ENCODE measurements at regions of chr15 and their contacts with region 1.

Region 1: GRCh38 chr15:101501703-101502373 is 12.3 kb upstream of the PCSK6 start:
- DNase-seq: peak; percentile 76

Region 2: DNA sequence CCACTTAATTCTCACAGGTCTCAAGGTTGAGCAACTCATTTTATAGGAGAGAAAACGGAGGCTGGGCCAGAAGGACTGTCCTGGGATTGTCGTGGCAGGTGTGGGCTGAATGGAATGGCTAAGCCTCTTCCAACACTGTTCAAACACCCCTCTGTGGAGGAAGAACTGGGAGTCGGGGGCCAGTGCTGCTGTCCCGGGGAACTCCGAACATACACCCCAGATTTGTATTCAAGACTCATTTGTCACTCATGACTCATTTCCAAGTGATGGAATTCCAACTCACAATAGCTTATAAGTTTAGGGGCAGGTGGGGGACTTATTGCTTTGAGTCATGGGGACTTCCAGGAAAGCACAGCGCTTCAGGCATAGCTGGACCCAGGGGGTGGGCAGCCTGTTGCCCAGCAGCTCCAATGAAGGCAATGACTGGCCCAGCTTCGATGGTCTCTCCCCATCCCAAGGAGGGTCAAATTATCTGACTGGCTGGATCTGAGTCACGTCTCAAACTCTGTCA is 77.8 kb after region 1 on chr15:
- intact Hi-C with region 1: loop called (anchors 5 kb)
- DNase-seq: no peak

Region 3: DNA sequence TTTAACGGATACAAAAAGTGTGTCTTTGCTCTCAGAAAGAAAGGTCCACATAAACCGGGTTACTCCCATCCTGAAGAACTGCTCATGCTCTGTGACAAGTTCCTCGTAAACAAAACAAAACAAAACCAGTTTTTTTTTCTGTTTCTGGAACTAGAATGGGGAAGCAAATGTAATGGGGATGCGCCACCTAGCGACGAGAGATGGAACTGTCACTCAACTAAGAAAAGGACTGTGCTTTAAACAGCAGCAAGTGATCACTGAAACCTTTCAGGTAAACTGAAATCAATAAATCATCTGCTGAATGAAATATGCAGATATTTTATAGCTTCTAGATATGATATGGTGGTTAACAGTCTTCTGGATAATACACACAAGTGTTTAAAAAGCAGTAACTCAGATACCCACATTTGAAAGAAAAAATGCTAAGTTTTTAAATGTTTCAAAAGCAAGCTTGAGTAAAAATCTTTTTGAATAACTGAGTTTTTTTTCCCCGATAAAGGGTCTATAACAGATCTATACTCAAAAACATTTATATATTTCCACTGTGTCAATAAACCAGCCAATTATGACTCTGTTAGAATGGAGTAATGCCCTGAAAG is 139.4 kb after region 1 on chr15:
- intact Hi-C with region 1: loop called (anchors 10 kb)
- DNase-seq: peak; percentile 84

Region 4: GRCh38 chr15:101652783-101653430 is 151.1 kb after region 1 on chr15:
- intact Hi-C with region 1: no loop called
- DNase-seq: no peak

Region 5: DNA sequence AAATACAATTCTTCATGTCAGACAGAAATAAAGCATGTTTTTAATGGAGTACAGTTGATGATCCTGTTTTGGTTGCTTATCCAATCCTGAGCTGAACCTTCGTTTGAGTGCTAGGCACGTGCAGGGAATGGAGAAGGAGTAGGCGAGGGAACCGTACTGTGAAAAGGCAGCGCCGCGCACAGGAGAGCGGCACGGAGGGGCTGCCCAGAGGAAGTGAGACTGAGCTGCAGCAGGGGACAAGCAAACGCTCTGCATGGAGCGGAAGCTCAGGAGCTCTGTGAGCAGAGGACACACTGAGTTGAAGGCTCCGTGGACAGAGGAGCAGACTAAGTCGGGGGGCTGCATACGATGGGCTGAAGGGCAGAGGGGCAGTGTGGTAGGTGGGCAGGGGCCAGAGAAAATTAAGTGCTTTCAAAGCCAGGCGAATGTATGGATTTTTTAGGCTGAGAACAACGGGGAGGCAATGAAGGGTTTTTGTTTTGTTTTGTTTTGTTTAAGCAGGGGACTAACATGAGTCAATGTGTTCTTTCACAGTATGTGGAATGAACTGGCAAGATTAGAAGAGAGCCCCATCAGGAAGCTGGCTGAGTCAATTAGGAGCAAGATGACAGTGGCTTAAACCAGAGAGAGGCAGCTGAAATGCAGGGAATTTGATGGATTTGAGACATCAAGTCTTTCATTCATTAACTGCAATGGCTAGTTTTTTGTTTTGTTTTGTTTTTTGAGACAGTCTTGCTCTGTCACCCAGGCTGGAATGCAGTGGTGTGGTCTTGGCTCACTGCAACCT is 174.2 kb after region 1 on chr15:
- intact Hi-C with region 1: no loop called
- DNase-seq: no peak

Measured in cardiac septum (tissue), 1 donor.